A549 (cell line): ENCODE measurements at regions of chr13 and their contacts with region 1.

Region 1: GRCh38 chr13:95378603-95379002 is 77.4 kb upstream of the ABCC4 start:
- DNase-seq: no peak
- ATAC-seq: no peak
- H3K4me3 ChIP-seq: no peak overlapping the region
- H3K27ac ChIP-seq: peak overlapping the region; percentile 9 to 12; a peak in 2 of 6 replicates
- H3K4me1 ChIP-seq: peaks cover 25% of the 10 kb centered on the region
- CTCF ChIP-seq: no peak
- EP300 ChIP-seq: no peak
- POLR2A ChIP-seq: no peak
- RAD21 ChIP-seq: no peak

Region 2: GRCh38 chr13:95301183-95301967 is 77.2 kb before region 1 on chr13 and contains the start of gene ABCC4:
- CTCF ChIA-PET with region 1: interaction called, 35 read pairs
- POLR2A ChIA-PET with region 1: no interaction called
- DNase-seq: peak; percentile 64 to 81
- ATAC-seq: peak; percentile 83
- H3K4me3 ChIP-seq: peak within 1 kb of the TSS; percentile 71
- H3K27ac ChIP-seq: peak within 1 kb of the TSS; percentile 90 to 96
- H3K4me1 ChIP-seq: peaks cover 38% of the 10 kb centered on the region
- CTCF ChIP-seq: no peak
- EP300 ChIP-seq: no peak
- POLR2A ChIP-seq: peak; percentile 27
- RAD21 ChIP-seq: no peak
- polyA plus RNA-seq, gene ABCC4: 46.4 and 56.2 TPM in 2 replicates

Region 3: DNA sequence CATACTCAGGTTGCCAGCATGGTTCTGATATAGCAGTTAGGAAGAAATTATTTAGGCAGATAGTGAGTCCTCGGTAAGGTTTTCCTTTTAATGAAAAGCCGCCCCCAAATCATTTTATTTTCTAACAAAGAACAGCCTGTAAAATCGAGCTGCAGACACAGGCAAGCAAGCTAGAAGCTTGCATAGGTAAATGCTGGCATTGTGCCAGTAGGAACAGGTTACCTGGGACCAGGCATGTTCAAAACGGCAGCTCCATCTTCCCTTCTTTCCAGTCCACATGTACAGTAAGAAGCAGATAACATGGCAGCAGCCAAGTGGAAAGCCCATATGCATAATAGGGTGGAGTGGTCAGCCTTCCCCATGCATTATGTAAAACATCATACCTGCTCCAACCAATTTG is 603.5 kb after region 1 on chr13:
- CTCF ChIA-PET with region 1: no interaction called
- POLR2A ChIA-PET with region 1: no interaction called
- DNase-seq: no peak
- ATAC-seq: no peak
- H3K4me3 ChIP-seq: no peak overlapping the region
- H3K27ac ChIP-seq: no peak overlapping the region
- H3K4me1 ChIP-seq: no peaks in the 10 kb centered on the region
- CTCF ChIP-seq: no peak
- EP300 ChIP-seq: no peak
- POLR2A ChIP-seq: no peak
- RAD21 ChIP-seq: no peak